ENCODE measurements at regions of chr2 and their contacts with region 1.

Region 1: DNA sequence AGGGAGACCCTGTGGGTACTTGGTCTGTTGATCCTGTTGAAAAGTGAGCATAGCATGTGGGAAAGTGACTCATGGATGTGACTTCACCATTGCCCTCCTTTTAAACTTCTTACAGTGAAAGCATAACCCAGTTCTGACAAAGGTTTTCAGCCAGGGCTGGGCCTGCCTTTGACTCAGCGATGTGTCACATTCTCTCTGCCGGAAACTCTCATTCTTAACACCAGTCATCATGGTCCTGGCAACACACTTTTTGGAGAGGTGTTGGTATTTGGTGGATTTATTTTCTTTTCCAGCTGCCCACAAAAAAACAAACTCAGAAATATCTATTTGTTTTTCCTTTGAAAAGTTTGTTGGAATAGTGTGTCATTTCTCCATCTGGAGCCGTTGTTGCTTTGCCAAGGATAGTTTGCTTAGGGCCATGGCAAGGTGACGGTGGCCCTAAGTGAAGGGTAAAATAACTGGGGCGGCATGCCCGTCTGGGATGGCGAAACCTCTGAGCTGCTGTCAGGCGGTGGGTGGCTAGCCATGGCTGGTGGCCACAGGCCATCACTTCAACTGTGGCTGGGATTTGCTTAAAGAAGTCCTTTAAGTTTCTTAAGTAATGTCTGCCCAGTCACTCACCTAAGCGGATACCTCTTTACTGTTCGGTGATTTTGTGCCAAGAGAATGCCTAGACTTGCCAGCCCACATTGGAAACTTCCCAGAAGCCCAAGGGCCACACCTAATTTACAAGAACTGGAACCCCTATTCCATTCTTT is 123.3 kb downstream of the LTBP1 start:
- DNase-seq: peak in 1 of 5 donors; percentile 39
- H3K4me3 ChIP-seq: no peak overlapping the region
- H3K27ac ChIP-seq: no peak overlapping the region
- H3K4me1 ChIP-seq: peaks cover 4% of the 10 kb centered on the region
- H3K27me3 ChIP-seq: no peaks in the 10 kb centered on the region
- CTCF ChIP-seq: no peak
- EP300 ChIP-seq: no peak
- POLR2A ChIP-seq: no peak

Region 2: GRCh38 chr2:33111002-33111446 is 41.0 kb after region 1 on chr2:
- intact Hi-C with region 1: loop called in 1 of 4 experiments (anchors 5 kb)
- DNase-seq: peak in 3 of 5 donors; percentile 20 to 42 (median 27)
- H3K4me3 ChIP-seq: no peak overlapping the region
- H3K27ac ChIP-seq: no peak overlapping the region
- H3K4me1 ChIP-seq: peaks cover 19% of the 10 kb centered on the region
- H3K27me3 ChIP-seq: no peaks in the 10 kb centered on the region
- CTCF ChIP-seq: no peak
- EP300 ChIP-seq: no peak
- POLR2A ChIP-seq: no peak

Region 3: GRCh38 chr2:33166287-33166881 is 96.3 kb after region 1 on chr2:
- intact Hi-C with region 1: loop called in 1 of 4 experiments (anchors 10 kb)
- DNase-seq: no peak
- H3K4me3 ChIP-seq: no peak overlapping the region
- H3K27ac ChIP-seq: no peak overlapping the region
- H3K4me1 ChIP-seq: peaks cover 5% of the 10 kb centered on the region
- H3K27me3 ChIP-seq: no peaks in the 10 kb centered on the region
- CTCF ChIP-seq: no peak
- EP300 ChIP-seq: no peak
- POLR2A ChIP-seq: no peak

Measured in ovary (tissue), 10 donors.